Heart right ventricle (tissue), 16 donors: ENCODE measurements at regions of chr3 and their contacts with region 1.

Region 1: DNA sequence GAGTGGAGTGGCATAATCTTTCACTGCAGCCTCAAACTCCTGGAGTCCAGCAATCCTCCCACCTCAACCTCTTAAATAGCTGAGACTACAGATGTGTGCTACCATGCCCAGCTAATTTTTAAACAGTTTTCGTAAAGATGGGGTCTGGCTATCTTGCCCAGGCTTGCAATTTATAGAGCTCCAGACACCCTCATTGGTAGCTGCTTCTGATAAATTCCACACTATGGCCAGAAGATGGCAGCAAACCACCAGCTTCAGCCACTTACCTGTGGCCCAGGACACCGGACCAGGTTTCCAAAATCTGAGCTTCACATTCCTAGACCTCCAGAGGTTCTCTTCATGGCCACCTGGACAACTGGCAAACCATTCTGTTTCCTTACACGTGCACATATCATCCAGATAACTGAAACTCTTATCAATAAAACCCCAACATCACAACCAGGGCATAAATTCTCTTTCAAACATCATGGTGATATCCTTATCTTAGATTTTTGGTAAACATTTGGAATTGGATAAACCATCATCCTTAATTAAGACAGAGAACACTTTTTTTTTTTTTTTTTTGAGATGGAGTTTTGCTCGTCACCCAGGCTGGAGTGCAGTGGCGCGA is 28.9 kb downstream of the FBXW12 start:
- DNase-seq: peak in 1 of 2 donors; percentile 56
- ATAC-seq: peak in 7 of 8 donors; percentile 43 to 83 (median 52)
- H3K4me3 ChIP-seq: no peak overlapping the region
- H3K27ac ChIP-seq: no peak overlapping the region
- H3K4me1 ChIP-seq: peaks cover 0 to 11% (median 0%) of the 10 kb centered on the region in 9 donors
- H3K27me3 ChIP-seq: peaks cover 0 to 4% (median 0%) of the 10 kb centered on the region in 7 donors
- CTCF ChIP-seq: peak; percentile 67 to 88 (median 82)

Region 2: GRCh38 chr3:48285132-48285531 is 115.8 kb before region 1 on chr3:
- intact Hi-C with region 1: loop called in 1 of 10 experiments (anchors 10 kb)
- DNase-seq: no peak
- ATAC-seq: no peak
- H3K4me3 ChIP-seq: no peak overlapping the region
- H3K27ac ChIP-seq: no peak overlapping the region
- H3K4me1 ChIP-seq: peaks cover 0 to 4% (median 0%) of the 10 kb centered on the region in 9 donors
- H3K27me3 ChIP-seq: no peaks in the 10 kb centered on the region
- CTCF ChIP-seq: no peak

Region 3: GRCh38 chr3:48429317-48429959 is 28.5 kb after region 1 on chr3:
- intact Hi-C with region 1: loop called in 4 of 10 experiments (anchors 2 kb)
- DNase-seq: peak; percentile 28 to 58
- ATAC-seq: peak in 5 of 8 donors; percentile 16 to 58 (median 39)
- H3K4me3 ChIP-seq: peak overlapping the region; percentile 36 to 96 (median 82)
- H3K27ac ChIP-seq: peak overlapping the region; percentile 82 to 93 (median 90)
- H3K4me1 ChIP-seq: peaks cover 29 to 54% (median 47%) of the 10 kb centered on the region in 9 donors
- H3K27me3 ChIP-seq: peaks cover 0 to 10% (median 0%) of the 10 kb centered on the region in 7 donors
- CTCF ChIP-seq: no peak

Region 4: DNA sequence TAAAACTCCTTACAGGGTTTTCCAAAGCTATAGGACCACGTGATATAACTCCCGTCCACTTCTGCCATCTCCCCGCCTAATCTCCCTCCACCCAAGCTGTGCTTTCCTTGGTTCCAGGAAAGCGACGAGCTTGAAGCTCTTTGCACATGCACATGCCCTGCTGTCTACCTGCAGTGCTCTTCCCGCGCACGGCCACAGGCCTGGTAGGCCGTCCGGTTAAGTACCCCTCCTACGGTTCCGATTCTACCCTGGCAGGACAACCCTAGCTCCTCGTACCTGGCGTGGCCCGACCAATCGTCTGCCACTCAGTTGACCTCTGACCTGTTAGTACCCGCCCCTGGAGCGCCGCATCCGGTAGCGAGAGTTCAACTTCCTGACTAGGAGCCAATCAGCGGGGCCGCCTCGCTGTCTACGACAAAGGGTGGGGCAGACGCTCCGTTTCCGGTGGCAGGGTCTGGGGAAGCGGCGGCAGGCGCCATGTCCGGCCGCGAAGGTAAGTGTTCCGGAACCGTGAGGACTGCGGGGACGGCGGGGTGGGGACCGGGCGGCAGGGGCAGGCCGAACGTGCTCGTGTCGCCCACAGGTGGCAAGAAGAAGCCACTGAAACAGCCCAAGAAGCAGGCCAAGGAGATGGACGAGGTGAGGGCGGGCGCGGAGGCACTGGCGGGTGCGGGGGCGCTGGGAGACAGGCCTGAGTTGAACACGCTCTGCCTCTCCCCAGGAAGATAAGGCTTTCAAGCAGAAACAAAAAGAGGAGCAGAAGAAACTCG is 39.1 kb after region 1 on chr3 and contains the starts of genes CCDC51 and TMA7:
- intact Hi-C with region 1: loop called (anchors 1 to 5 kb)
- DNase-seq: peak; percentile 98
- ATAC-seq: peak; percentile 97 to 99 (median 99)
- H3K4me3 ChIP-seq: peak within 1 kb of the TSS; percentile 71 to 99 (median 88)
- H3K27ac ChIP-seq: peak within 1 kb of the TSS; percentile 68 to 98 (median 96)
- H3K4me1 ChIP-seq: peaks cover 0 to 36% (median 27%) of the 10 kb centered on the region in 9 donors
- H3K27me3 ChIP-seq: no peaks in the 10 kb centered on the region
- CTCF ChIP-seq: no peak
- total RNA-seq, gene CCDC51: 9.5 to 14.3 (median 12.2) TPM
- total RNA-seq, gene TMA7: 140 to 227 (median 193) TPM

Region 5: GRCh38 chr3:48548729-48549705 is 148.1 kb after region 1 on chr3:
- intact Hi-C with region 1: loop called in 7 of 10 experiments (anchors 2 to 5 kb)
- DNase-seq: peak; percentile 86 to 87
- ATAC-seq: peak; percentile 83 to 97 (median 94)
- H3K4me3 ChIP-seq: no peak overlapping the region
- H3K27ac ChIP-seq: no peak overlapping the region
- H3K4me1 ChIP-seq: peaks cover 0 to 38% (median 5%) of the 10 kb centered on the region in 9 donors
- H3K27me3 ChIP-seq: no peaks in the 10 kb centered on the region
- CTCF ChIP-seq: peak; percentile 92 to 98 (median 95)

Region 6: GRCh38 chr3:48826451-48826850 is 425.5 kb after region 1 on chr3:
- intact Hi-C with region 1: no loop called
- DNase-seq: no peak
- ATAC-seq: peak in 4 of 8 donors; percentile 50 to 78 (median 66)
- H3K4me3 ChIP-seq: no peak overlapping the region
- H3K27ac ChIP-seq: no peak overlapping the region
- H3K4me1 ChIP-seq: peaks cover 0 to 23% (median 8%) of the 10 kb centered on the region in 9 donors
- H3K27me3 ChIP-seq: no peaks in the 10 kb centered on the region
- CTCF ChIP-seq: no peak